ENCODE measurements at regions of chr22 and their contacts with region 1.

Region 1: DNA sequence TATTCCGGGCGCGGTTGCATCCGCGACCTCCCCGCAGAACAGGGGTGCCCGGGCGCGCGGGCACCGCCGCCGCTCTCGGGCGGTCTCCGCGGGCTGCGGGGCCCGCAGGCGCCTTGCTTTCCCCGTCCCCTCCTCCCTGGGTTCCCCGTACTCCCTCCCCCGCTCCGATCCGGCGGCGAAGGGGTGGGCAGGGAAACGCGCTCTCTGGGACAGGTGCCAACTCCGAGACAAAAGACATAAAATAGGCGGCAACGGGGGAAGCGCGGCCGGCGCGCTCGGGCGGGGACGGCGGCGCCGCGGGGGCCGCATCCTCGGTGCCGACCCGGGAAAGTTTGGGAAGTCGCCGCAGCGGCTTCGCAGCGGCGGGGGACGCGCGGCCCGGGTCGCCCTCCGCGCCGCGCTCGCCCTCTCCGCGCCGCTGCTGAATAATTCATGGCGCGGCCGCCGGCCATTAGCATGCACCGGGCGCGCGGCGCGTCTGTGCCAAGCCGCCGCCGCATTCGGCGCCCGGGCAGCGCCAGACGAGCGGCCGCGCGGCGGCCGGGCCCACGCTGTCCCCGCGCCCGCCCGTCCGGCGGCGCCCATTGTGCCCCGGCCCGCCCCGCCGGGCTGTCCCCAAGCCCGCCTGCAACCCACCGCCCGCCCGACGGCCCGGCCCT is 78.7 kb upstream of the PPARA start:
- DNase-seq: peak; percentile 71
- H3K4me3 Mint-ChIP-seq: peak overlapping the region; percentile 77
- H3K27ac Mint-ChIP-seq: peak overlapping the region; percentile 83
- H3K4me1 Mint-ChIP-seq: peaks cover 37% of the 10 kb centered on the region
- H3K27me3 Mint-ChIP-seq: peaks cover 2% of the 10 kb centered on the region

Region 2: DNA sequence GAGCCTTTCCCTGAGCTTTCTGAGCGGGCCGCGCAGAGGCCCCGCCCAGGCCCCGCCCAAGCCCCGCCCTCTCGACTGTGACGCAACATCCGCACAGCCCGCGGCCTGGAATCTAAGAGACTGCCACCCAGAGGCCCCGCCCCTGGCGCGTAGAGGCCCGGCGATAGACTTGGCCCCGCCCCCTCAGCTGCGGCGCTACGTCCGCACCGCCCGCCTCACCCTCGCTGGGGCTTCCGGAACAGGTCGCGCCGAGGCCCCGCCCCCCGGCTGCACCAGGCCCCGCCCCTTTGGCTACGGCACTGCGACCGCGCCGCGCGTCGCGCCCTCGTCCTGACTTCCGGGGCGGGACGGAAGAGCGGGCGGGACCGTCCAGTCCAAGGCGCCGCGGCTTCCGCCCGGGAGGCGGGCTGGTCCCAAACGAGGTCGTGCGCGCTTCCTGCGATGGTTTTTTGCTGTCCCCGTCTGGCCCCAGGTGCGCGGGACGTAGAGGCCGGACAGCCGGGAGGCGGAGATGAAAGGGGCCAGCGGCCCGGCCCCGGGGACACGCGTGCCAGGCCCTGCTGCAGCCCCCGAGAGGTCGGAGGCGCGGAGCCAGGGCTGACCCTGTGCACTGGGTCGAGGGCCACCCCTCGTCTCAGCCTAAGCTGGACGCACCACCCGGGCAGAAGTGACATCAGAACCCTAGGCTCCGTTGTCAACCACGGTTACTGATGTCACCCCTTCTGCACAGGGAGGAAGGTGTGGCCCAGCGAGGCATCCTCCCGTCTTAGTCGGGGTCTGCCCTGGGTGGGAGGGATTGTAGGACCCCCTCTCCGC is 35.6 kb before region 1 on chr22:
- CTCF ChIA-PET with region 1: interaction called, 4 read pairs
- POLR2A ChIA-PET with region 1: interaction called, 10 read pairs
- intact Hi-C with region 1: loop called (anchors 2 kb)
- DNase-seq: peak; percentile 100
- H3K4me3 Mint-ChIP-seq: peak overlapping the region; percentile 83
- H3K27ac Mint-ChIP-seq: peak overlapping the region; percentile 86
- H3K4me1 Mint-ChIP-seq: peaks cover 12% of the 10 kb centered on the region
- H3K27me3 Mint-ChIP-seq: no peaks in the 10 kb centered on the region

Region 3: DNA sequence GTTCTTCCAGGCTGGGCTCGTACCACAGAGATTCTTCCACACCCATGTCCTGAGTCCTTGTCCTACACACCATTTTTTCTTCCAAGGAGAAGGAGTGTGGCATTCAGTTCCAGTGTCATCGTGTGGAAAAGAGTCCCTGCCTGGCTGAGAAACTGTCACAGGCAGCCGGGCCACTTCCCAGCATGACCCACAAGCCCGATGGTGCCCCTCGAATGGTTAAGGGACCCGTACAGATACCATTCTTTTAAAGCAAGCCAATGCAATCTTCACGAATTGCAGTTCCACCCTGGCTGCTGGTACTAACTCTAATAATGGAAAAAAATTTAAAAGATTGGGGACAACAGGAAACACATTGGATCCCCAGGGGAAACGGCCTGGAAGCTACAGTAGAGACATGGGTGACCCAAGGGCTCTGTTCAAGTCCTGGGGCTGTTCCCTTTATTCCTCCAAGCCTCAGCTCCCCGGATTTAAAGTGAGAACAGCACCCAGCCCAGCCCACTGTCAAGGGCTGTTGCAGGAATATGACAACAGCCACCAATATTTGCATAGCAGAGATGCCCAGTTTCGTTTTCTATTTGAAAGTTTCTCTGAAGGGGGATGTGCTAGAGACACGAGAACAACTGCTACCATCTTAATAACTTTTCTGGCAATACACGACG is 13.7 kb before region 1 on chr22:
- CTCF ChIA-PET with region 1: interaction called, 4 read pairs
- POLR2A ChIA-PET with region 1: interaction called, 6 read pairs
- intact Hi-C with region 1: loop called (anchors 2 kb)
- DNase-seq: peak; percentile 61
- H3K4me3 Mint-ChIP-seq: peak overlapping the region; percentile 26
- H3K27ac Mint-ChIP-seq: peak overlapping the region; percentile 85
- H3K4me1 Mint-ChIP-seq: peaks cover 38% of the 10 kb centered on the region
- H3K27me3 Mint-ChIP-seq: no peaks in the 10 kb centered on the region

Region 4: DNA sequence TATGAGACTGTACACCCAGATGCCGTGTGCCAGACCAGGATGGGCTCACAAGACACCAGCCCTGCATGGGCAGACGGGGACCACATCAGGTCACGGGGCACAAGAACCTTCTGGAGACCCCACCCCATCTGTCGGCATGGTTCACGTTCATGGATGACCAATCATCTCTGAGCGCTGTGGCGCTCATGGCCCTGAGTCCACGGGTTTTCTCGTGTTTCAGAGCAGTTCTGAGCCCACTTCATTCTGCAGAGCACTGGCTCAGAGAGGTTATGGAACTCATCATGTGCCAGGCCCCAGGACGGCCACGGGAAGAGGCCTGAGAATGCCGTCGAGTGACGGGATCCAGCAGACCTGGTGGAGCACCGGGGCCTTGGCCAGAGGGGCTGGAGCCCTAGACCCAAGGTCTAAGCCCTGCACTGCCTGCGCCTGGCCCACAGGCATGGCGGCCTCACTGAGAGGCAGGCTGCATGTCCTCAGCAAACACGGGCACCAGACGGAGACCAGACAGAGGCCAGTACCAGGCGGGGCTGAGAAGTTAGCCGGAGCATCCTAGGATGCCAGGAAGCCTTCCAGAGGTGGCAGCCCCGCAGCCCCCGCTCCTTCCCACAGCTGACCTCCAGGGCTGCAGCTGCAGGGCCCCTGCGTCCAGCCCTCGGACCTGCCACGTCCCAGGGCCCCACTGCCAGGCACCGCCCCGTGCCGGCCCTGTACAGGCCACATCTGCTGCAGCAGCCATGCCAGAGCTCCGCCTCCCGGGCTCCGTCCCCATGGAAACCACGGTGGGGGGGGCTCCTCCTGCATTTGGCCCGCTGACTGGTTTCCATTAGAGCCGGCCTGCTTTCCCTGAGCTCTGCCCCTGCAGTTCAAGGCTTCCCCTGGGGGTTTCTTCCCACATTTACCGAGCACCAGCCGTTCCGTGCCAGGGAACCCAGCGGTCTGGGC is 16.0 kb after region 1 on chr22:
- CTCF ChIA-PET with region 1: no interaction called
- POLR2A ChIA-PET with region 1: no interaction called
- intact Hi-C with region 1: no loop called
- DNase-seq: no peak
- H3K4me3 Mint-ChIP-seq: no peak overlapping the region
- H3K27ac Mint-ChIP-seq: no peak overlapping the region
- H3K4me1 Mint-ChIP-seq: no peaks in the 10 kb centered on the region
- H3K27me3 Mint-ChIP-seq: no peaks in the 10 kb centered on the region